ENCODE measurements at regions of chr1 and their contacts with region 1.

Region 1: DNA sequence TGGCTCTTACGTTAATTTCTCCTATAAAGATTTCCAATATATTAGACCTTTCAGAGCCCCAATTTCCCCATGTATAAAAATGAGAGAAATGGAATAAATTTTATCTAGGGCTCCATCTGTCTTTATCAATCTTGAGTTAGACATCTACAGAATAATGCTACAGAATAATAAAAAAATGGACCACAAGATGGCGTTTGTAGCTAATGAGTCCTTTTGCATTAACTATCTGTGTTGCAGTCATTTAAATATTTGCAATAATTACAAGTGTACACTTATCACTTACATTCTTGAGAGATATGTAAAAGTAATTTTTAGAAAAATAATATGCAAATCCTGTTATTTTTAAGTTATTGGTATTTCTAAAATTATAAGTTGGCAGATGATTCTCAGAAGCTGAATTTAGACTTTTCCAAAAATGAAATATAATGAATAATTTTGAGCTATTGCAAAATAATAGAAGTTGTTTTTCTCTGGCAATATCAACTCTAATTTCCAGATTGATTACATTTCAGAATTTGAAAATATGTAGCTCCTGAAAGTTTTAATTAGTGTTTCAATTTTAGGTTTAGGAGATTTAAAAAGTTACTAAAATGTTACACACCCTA is 87.7 kb downstream of the SNX7 start:
- DNase-seq: peak; percentile 11 to 41 (median 34)
- H3K4me3 ChIP-seq: no peak overlapping the region
- H3K27ac ChIP-seq: no peak overlapping the region
- H3K4me1 ChIP-seq: no peaks in the 10 kb centered on the region
- H3K27me3 ChIP-seq: no peaks in the 10 kb centered on the region

Region 2: DNA sequence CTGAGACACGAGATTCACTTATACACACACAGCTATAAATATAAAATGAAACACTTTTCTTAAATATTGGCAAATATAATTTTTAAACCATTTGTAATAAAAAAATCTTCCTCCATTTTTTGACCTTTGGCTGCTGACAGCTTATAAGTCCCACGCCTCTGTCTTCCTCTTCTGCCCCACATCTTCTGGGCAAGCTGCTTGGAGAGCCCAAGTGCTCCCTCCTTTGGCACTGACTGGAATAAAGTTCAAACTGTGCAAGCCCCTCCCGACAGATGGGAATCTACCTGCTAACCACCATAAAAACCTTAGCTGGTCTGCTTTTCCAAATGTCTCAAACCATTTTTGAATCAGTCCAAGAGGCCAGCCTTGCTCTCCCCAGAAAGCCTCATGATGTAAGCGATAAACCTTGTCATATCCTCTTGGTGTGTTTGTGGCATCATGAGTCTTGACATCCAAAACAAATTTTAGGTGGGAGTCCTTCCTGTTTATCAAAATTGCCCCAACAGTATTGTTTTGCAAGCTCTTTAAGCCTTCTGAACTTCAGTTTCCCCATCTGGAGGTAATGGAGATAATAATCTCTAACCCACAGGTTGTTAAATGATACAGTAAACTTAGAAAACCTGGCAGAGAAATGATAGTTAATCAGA is 12.1 kb after region 1 on chr1:
- CTCF ChIA-PET with region 1: interaction called, 27 read pairs
- POLR2A ChIA-PET with region 1: no interaction called
- DNase-seq: peak in 1 of 3 donors; percentile 0
- H3K4me3 ChIP-seq: no peak overlapping the region
- H3K27ac ChIP-seq: no peak overlapping the region
- H3K4me1 ChIP-seq: no peaks in the 10 kb centered on the region
- H3K27me3 ChIP-seq: no peaks in the 10 kb centered on the region